ENCODE measurements at regions of chr12 and their contacts with region 1.

Region 1: GRCh38 chr12:123232807-123233543 is at the starts of genes MPHOSPH9 and MTRFR:
- DNase-seq: peak; percentile 99
- H3K4me3 Mint-ChIP-seq: peak within 1 kb of the TSS; percentile 100
- H3K27ac Mint-ChIP-seq: peak within 1 kb of the TSS; percentile 99
- H3K4me1 Mint-ChIP-seq: peaks cover 68% of the 10 kb centered on the region
- H3K27me3 Mint-ChIP-seq: peaks cover 2% of the 10 kb centered on the region
- total RNA-seq, gene MPHOSPH9: 87.3 and 89.9 TPM in 2 replicates
- total RNA-seq, gene MTRFR: 32.6 and 34.2 TPM in 2 replicates

Region 2: GRCh38 chr12:122526683-122527477 is 706.1 kb before region 1 on chr12 and contains the starts of genes KNTC1 and RSRC2:
- intact Hi-C with region 1: loop called (anchors 10 kb)
- DNase-seq: peak; percentile 99
- H3K4me3 Mint-ChIP-seq: no peak within 1 kb of the TSS
- H3K27ac Mint-ChIP-seq: no peak within 1 kb of the TSS
- H3K4me1 Mint-ChIP-seq: peaks cover 43% of the 10 kb centered on the region
- H3K27me3 Mint-ChIP-seq: no peaks in the 10 kb centered on the region
- total RNA-seq, gene KNTC1: 122 and 126 TPM in 2 replicates
- total RNA-seq, gene RSRC2: 101 and 103 TPM in 2 replicates

Region 3: DNA sequence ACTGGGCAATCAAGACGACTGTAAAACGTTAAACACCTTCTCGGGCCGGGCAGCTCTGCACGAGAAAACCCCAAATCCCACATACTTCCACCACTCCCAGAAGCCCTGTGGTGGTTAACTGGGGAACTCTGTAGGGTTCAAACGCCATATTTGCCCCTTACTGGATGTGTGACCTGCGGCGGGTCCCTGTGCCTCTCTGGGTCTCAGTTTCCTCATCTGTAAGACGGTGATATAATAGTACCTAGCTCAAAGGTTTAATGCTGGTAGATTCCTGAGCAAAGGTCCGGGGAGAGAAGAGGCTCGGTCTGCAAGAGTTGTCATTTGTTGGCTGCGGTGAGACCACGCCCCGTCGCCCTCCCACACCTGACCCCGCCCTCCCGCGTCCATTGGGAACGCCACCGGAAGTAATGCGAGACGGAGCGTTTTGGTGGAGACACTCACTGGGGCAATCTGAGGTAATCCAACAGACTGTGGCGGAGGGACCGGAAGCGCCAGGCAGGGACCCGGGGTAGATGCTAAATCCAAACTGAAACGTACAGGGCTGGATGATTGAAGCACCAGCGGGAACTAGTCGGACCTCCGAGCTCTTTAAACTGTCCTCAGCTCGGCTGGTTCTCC is 258.6 kb before region 1 on chr12:
- intact Hi-C with region 1: loop called (anchors 1 kb)
- DNase-seq: peak; percentile 98
- H3K4me3 Mint-ChIP-seq: peak overlapping the region; percentile 98
- H3K27ac Mint-ChIP-seq: peak overlapping the region; percentile 98
- H3K4me1 Mint-ChIP-seq: peaks cover 12% of the 10 kb centered on the region
- H3K27me3 Mint-ChIP-seq: peaks cover 3% of the 10 kb centered on the region

Region 4: DNA sequence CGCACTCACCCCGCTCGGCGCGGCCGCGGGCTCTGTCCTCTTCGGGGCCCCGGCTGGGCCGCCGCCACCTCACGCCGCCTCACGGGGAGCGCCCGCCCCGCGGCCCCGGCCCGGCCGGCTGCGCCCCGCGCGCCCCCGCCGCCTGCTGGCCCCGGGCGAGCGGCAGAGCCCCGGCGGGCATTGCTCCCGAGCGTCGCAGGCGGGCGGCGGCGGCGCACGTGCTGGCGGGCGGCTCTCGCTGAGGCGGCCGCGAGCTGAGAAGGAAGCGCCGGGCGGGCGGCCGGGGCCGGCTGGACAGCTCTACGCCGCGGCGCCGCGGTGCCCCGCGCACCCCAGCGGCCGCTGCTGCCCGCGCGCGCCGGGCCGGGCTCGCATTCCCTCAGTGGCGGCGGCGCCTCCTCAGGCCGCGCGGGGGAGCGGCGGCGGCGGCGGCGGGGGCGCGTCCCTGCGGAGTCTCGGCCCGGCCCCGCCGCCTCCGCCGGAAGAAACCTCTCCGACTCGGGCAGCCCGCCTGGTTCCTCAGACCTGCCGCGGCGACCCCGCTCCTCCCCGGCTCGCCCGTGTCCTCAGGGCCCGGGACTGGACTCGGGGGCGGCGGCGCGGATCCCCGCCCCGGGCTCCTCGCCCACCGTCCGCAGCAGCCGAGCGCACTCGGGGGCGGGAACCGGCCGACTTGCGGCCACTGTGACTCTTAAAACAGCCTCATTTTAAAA is 82.1 kb before region 1 on chr12 and contains the start of gene PITPNM2:
- intact Hi-C with region 1: loop called (anchors 5 kb)
- DNase-seq: peak; percentile 56
- H3K4me3 Mint-ChIP-seq: peak within 1 kb of the TSS; percentile 89
- H3K27ac Mint-ChIP-seq: peak within 1 kb of the TSS; percentile 90
- H3K4me1 Mint-ChIP-seq: peaks cover 41% of the 10 kb centered on the region
- H3K27me3 Mint-ChIP-seq: peaks cover 16% of the 10 kb centered on the region
- total RNA-seq, gene PITPNM2: 22.3 and 25.5 TPM in 2 replicates

Region 5: GRCh38 chr12:123319273-123319672 is 86.3 kb after region 1 on chr12:
- intact Hi-C with region 1: no loop called
- DNase-seq: no peak
- H3K4me3 Mint-ChIP-seq: no peak overlapping the region
- H3K27ac Mint-ChIP-seq: no peak overlapping the region
- H3K4me1 Mint-ChIP-seq: no peaks in the 10 kb centered on the region
- H3K27me3 Mint-ChIP-seq: no peaks in the 10 kb centered on the region

Region 6: GRCh38 chr12:123436017-123436964 is 203.3 kb after region 1 on chr12 and contains the start of gene RILPL2:
- intact Hi-C with region 1: loop called (anchors 1 kb)
- DNase-seq: peak; percentile 91
- H3K4me3 Mint-ChIP-seq: peak within 1 kb of the TSS; percentile 99
- H3K27ac Mint-ChIP-seq: peak within 1 kb of the TSS; percentile 99
- H3K4me1 Mint-ChIP-seq: peaks cover 39% of the 10 kb centered on the region
- H3K27me3 Mint-ChIP-seq: no peaks in the 10 kb centered on the region
- total RNA-seq, gene RILPL2: 20.1 and 20.6 TPM in 2 replicates

Region 7: GRCh38 chr12:123457980-123458783 is 225.2 kb after region 1 on chr12 and contains the start of gene SNRNP35:
- intact Hi-C with region 1: no loop called
- DNase-seq: peak; percentile 79
- H3K4me3 Mint-ChIP-seq: peak within 1 kb of the TSS; percentile 95
- H3K27ac Mint-ChIP-seq: peak within 1 kb of the TSS; percentile 99
- H3K4me1 Mint-ChIP-seq: peaks cover 17% of the 10 kb centered on the region
- H3K27me3 Mint-ChIP-seq: no peaks in the 10 kb centered on the region
- total RNA-seq, gene SNRNP35: 31.5 and 34.5 TPM in 2 replicates